ENCODE measurements at regions of chr20 and their contacts with region 1.

Region 1: DNA sequence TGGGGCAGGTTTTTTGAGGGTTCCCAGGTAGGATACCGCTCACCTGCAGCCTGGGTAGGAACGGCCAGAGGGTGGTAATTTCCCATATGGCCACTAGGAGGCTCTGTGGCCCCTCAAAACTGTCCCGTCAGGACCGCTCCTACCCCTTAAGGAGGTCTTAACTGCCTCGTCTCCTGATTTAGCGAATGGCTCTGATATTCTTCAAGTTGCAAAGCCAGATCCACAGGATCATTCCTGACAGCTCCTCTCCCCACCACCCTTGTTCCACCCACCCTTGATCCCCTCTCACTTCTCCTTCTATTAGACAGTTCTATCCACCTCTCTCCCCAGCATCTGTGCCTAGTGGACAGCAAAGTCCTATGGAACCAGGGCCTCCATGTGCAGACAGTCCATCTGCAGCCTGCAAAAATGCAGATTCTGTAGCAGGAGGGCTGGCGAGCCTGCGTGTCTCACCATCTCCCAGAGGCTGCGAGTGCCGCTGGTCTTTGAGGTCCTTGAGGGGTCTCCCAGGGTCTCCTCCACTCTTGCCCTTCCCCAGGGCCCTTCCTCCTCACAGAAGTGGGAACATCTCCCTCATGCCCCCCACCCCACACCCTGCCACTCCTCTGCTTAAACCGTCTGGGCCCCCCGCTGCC is 34.3 kb upstream of the ZBP1 start:
- DNase-seq: peak; percentile 51 to 62 (median 56)
- ATAC-seq: peak; percentile 78
- H3K4me3 ChIP-seq: no peak overlapping the region
- H3K27ac ChIP-seq: no peak overlapping the region
- H3K4me1 ChIP-seq: peaks cover 4% of the 10 kb centered on the region
- H3K27me3 ChIP-seq: no peaks in the 10 kb centered on the region
- CTCF ChIP-seq: peak; percentile 73 to 91 (median 78)
- POLR2A ChIP-seq: no peak

Region 2: GRCh38 chr20:57388953-57389694 is 265.4 kb before region 1 on chr20:
- intact Hi-C with region 1: no loop called
- DNase-seq: peak; percentile 81 to 89 (median 85)
- ATAC-seq: peak; percentile 83
- H3K4me3 ChIP-seq: no peak overlapping the region
- H3K27ac ChIP-seq: peak overlapping the region in 3 of 4 donors; percentile 33 to 66 (median 57)
- H3K4me1 ChIP-seq: peaks cover 33% of the 10 kb centered on the region
- H3K27me3 ChIP-seq: no peaks in the 10 kb centered on the region
- CTCF ChIP-seq: peak in 3 of 7 experiments; percentile 21 to 44 (median 29)
- POLR2A ChIP-seq: peak; percentile 18 to 49 (median 47)

Region 3: DNA sequence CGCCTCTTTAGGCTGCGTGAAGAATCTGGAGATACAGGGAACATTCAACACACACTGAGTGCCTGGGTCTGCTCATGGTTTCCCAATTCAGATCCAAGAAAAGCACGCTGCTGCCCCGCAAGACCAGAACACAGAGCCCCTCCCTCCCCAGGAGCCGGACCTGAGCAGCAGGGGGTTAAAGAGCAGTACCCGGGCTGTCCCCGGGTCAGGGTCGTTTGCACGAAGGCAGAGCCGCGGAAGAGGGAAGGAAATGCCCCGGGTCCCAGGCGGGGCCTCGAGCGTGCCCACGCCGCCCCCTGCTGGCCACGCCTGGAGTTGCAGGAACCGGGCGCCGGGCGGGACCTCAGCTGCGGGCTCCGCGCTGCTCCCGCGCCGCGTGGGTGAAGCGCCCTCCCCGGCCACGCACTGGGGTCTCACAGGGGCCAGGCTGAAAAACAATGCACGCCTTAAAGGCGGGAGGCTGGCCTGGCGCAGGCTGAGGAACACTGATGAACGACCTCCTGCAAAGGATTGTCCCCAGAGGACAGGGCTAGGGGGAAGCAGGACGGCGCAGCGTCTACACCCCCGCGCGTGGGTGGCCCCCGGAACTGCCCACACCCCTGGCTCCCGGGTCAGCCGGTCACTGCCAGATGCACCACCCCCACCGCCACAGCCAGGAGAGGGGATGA is 525.1 kb after region 1 on chr20:
- intact Hi-C with region 1: loop called (anchors 10 kb)
- DNase-seq: peak; percentile 34 to 56 (median 48)
- ATAC-seq: peak; percentile 82
- H3K4me3 ChIP-seq: no peak overlapping the region
- H3K27ac ChIP-seq: no peak overlapping the region
- H3K4me1 ChIP-seq: peaks cover 11% of the 10 kb centered on the region
- H3K27me3 ChIP-seq: peaks cover 0 to 11% of the 10 kb centered on the region in 2 donors
- CTCF ChIP-seq: peak; percentile 81 to 99 (median 89)
- POLR2A ChIP-seq: no peak

Measured in body of pancreas (tissue), 4 donors.